ENCODE measurements at regions of chr1 and their contacts with region 1.

Region 1: DNA sequence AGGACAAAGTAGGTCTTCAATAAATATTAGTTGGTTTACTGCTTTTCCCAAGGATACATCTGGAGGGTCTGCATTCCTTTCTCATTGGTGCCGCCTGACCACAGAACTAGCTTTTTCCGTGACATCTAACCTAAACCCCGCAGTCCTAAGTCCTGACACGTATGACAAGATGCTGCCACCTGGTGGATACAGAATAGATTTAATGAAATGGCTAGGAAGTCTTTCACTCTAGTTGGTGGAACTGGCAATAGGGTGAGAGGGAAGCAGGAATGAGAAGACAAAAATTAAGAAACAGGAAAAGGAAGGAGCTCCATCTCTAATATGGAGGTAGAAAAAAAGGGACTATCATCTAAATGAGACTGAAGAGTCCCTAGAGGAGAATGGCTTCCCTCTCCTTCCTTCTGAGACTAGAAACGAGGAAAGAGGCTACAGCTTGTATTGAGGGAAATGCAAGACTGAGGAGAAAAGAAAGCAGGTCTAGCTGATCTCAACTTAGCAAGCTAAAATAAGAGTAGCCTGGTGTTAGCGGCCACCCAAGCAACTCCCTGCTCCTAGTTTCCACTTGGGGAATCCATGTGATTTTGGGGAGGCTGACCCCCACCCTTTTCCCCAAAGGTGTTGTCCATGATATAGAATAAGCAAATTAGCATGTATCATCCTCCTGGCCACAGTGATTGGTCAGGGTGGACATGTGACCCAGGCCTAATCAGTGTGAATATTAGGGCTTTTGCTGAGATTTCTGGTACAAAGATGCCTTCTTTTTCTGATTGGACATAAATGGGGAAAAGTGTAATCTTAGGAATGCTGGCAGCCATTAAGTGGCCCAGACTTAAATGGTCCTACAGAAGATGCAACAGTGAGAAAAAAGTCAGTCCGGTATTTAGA is 5.9 kb downstream of the RFX5 start:
- DNase-seq: peak; percentile 72
- H3K4me3 ChIP-seq: no peak overlapping the region
- H3K27ac ChIP-seq: peak overlapping the region; percentile 68
- H3K27me3 ChIP-seq: no peaks in the 10 kb centered on the region
- CTCF ChIP-seq: peak; percentile 64

Region 2: GRCh38 chr1:151198255-151199127 is 142.6 kb before region 1 on chr1 and contains the start of gene PIP5K1A:
- CTCF ChIA-PET with region 1: interaction called, 12 read pairs
- POLR2A ChIA-PET with region 1: no interaction called
- DNase-seq: peak; percentile 95
- H3K4me3 ChIP-seq: peak within 1 kb of the TSS; percentile 97
- H3K27ac ChIP-seq: peak within 1 kb of the TSS; percentile 94
- H3K27me3 ChIP-seq: no peaks in the 10 kb centered on the region
- CTCF ChIP-seq: no peak
- polyA plus RNA-seq, gene PIP5K1A: 170 and 179 TPM in 2 replicates

Region 3: GRCh38 chr1:151294742-151295462 is 46.2 kb before region 1 on chr1:
- CTCF ChIA-PET with region 1: interaction called, 427 read pairs
- POLR2A ChIA-PET with region 1: no interaction called
- DNase-seq: no peak
- H3K4me3 ChIP-seq: no peak overlapping the region
- H3K27ac ChIP-seq: no peak overlapping the region
- H3K27me3 ChIP-seq: no peaks in the 10 kb centered on the region
- CTCF ChIP-seq: no peak

Region 4: GRCh38 chr1:151318745-151319374 is 22.3 kb before region 1 on chr1:
- CTCF ChIA-PET with region 1: interaction called, 427 read pairs
- POLR2A ChIA-PET with region 1: no interaction called
- DNase-seq: no peak
- H3K4me3 ChIP-seq: no peak overlapping the region
- H3K27ac ChIP-seq: no peak overlapping the region
- H3K27me3 ChIP-seq: no peaks in the 10 kb centered on the region
- CTCF ChIP-seq: no peak

Region 5: DNA sequence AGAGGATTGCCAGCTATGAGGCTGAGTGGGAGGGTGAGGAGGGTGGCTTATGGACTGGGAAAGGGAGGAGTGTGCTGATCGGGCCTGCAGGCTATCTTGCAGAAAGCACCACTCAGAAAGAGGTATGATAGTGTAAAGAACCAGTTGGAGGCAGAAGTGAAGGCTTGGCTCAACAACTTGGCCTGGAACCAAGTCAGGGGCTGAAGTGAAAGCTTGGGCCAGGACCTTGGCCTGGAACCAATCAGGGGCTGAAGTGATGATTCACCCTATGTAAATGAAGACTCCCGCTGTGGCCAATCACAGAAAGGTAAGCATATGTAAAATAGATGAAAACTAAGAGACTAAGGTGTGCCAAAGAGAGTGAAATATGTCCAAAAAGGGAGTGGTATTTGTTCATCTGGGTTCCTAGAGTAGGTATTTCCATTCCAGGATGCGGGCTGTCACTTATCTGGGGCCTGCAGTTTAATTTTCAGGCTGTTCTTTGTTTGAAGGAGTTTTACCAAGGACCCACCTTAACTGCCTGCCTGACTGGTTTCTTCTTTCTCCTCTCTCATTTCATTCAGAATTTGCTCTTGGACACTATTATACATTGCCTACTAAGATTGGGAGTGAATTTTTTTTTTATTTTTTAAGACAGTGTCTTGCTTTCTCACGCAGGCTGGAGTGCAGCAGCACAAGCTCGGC is 11.0 kb after region 1 on chr1:
- CTCF ChIA-PET with region 1: interaction called, 38 read pairs
- POLR2A ChIA-PET with region 1: no interaction called
- DNase-seq: no peak
- H3K4me3 ChIP-seq: no peak overlapping the region
- H3K27ac ChIP-seq: no peak overlapping the region
- H3K27me3 ChIP-seq: no peaks in the 10 kb centered on the region
- CTCF ChIP-seq: no peak

Region 6: DNA sequence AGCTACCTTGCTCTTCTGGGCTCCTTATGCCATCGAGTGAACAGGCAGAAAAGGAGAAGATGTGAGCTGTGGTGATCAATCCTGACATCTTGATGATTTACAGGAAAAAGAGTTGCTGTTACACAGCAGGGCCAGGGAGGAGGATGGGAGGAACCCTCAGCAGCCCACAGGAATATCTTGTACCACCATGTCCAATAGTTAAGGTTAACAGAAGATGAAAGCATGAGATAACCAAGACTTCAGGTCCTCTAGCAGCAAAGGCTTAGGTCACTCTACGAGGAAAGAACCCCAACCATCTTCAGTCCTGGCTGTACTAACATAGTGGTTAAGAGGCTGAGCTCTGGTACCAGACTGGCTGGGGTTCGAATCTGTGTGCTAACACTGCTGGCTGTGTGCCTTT is 43.5 kb after region 1 on chr1:
- CTCF ChIA-PET with region 1: interaction called, 15 read pairs
- POLR2A ChIA-PET with region 1: no interaction called
- DNase-seq: no peak
- H3K4me3 ChIP-seq: no peak overlapping the region
- H3K27ac ChIP-seq: no peak overlapping the region
- H3K27me3 ChIP-seq: peaks cover 6% of the 10 kb centered on the region
- CTCF ChIP-seq: no peak

Measured in AG04450 (cell line).